Pancreas (tissue), 10 donors: ENCODE measurements at regions of chr21 and their contacts with region 1.

Region 1: GRCh38 chr21:39137248-39138178 is 45.7 kb downstream of the PSMG1 start:
- DNase-seq: no peak
- ATAC-seq: peak in 1 of 4 donors; percentile 33
- H3K4me3 ChIP-seq: no peak overlapping the region
- H3K27ac ChIP-seq: no peak overlapping the region
- H3K4me1 ChIP-seq: peaks cover 0 to 2% (median 0%) of the 10 kb centered on the region in 3 donors
- H3K27me3 ChIP-seq: no peaks in the 10 kb centered on the region
- CTCF ChIP-seq: no peak

Region 2: DNA sequence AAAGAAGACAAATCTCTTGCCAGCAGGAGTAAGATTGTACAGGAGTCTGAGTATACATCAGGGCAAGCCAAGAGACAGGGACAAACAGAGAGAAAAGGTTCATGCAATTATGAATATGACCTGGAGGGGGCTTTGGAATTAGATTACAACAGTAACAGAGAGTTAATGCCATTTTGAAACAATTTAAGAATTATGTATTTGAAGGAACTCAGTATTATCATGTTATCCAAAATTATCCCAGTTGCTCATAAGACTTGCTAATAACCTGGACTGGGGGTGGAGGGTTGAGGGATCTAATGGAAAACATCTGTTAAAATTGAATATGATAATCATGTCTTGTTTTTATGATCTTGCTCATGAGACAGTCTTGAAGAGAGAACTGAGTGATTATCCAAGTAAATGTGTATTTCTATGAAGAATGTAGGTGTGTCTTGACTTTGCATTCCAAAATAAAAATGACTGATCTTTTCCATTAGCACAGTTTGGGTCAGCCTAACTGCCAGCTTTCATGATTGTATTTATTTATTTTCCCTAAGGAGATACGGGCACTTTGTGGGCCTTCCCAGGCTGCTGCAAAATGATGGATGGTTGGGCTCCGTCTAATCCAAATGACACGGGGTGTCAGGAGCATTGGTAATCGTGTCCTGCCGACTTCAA is 756.9 kb before region 1 on chr21:
- intact Hi-C with region 1: loop called in 1 of 3 experiments (anchors 10 kb)
- DNase-seq: no peak
- ATAC-seq: no peak
- H3K4me3 ChIP-seq: no peak overlapping the region
- H3K27ac ChIP-seq: no peak overlapping the region
- H3K4me1 ChIP-seq: no peaks in the 10 kb centered on the region
- H3K27me3 ChIP-seq: peaks cover 0 to 4% (median 0%) of the 10 kb centered on the region in 4 donors
- CTCF ChIP-seq: no peak

Region 3: DNA sequence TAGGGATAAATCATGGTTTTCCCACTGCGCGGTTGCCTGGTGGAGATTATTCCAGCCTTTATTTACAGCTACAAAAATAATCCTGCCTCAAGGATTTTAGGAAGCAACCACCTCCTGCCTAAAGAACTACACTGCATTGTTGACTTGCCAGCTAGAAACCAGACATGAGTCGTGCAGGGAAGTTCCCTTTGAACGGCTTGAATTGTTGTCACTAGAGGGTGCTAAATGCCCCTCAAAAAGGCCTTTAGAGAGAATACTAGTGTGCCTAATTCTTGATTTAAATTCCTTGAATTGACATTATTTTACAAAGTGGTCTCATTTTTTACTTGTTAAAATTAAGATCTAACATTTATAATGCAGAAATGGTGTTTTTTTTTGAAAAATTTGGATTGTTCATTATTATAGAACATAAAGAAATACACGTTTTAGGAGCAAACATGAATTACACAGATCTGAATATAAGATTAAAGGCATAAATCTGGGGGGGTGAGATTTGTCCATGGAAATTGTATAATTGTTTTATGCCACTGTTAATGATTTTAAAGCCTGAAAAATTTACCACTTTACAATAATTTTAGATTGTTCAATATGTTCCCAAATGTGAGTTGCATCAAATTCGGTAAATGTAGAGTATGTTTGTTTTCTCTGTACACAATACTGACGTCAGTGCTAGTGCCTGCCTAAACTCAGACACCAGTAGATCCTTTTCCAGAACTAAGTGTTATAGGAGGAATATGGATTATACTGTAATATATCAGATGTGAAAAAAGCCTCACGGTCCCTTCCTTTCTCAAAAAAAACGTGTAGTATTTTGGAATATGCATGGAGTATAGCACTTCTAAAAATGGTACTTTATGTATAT is 631.6 kb before region 1 on chr21:
- intact Hi-C with region 1: loop called in 1 of 3 experiments (anchors 10 kb)
- DNase-seq: peak in 1 of 6 donors; percentile 27
- ATAC-seq: peak in 3 of 4 donors; percentile 86 to 94 (median 91)
- H3K4me3 ChIP-seq: no peak overlapping the region
- H3K27ac ChIP-seq: no peak overlapping the region
- H3K4me1 ChIP-seq: no peaks in the 10 kb centered on the region
- H3K27me3 ChIP-seq: peaks cover 0 to 5% (median 0%) of the 10 kb centered on the region in 4 donors
- CTCF ChIP-seq: peak in 3 of 4 donors; percentile 27 to 36 (median 32)

Region 4: DNA sequence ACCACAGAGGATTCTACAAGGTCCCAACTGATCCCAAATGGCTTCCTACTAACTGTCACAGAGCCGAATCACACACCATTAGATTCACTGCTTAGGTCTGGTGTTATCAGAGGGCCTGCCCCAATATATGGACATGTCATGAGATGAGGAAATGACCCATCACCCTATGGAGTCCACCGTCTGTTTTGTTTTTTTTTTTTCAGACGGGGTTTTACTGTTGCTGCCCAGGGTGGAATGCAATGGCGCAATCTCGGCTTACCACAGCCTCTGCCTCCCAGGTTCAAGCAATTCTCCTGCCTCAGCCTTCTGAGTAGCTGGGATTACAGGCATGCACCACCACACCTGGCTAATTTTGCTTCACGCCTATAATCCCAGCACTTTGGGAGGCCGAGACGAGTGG is 415.5 kb before region 1 on chr21:
- intact Hi-C with region 1: loop called in 1 of 3 experiments (anchors 10 kb)
- DNase-seq: no peak
- ATAC-seq: no peak
- H3K4me3 ChIP-seq: no peak overlapping the region
- H3K27ac ChIP-seq: no peak overlapping the region
- H3K4me1 ChIP-seq: no peaks in the 10 kb centered on the region
- H3K27me3 ChIP-seq: no peaks in the 10 kb centered on the region
- CTCF ChIP-seq: no peak

Region 5: DNA sequence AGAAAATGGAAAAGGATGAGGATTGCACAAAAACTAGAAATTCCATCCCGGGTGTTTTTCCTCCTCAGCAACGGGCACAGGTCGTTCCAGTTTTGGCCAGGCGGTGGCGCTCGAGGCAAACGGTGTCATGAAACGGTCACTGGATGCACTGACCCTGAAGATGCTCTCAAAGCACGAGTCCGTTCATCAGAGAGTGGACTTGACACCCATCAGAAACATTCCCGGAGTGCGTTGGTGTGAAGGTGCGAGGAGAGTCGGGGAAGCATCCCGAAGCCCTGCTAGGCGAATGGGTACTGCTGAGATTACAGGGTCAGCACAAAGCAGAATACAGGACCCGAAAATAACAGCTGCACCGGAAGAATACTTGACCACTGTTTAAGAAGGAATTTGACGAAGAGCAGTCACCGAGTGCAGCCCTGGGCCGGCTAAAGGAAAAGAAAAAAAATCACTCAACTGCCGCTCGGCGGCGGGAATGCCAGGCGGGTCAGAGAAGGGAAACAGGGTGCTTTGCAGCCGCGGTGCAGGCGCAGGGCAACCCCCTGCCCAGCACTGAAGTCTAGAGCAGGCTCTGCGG is 403.5 kb before region 1 on chr21:
- intact Hi-C with region 1: loop called (anchors 5 to 10 kb)
- DNase-seq: peak; percentile 47 to 99 (median 84)
- ATAC-seq: peak; percentile 66 to 98 (median 95)
- H3K4me3 ChIP-seq: peak overlapping the region in 1 of 4 donors; percentile 8
- H3K27ac ChIP-seq: peak overlapping the region in 2 of 4 donors; percentile 25 to 27
- H3K4me1 ChIP-seq: no peaks in the 10 kb centered on the region
- H3K27me3 ChIP-seq: peaks cover 0 to 6% (median 0%) of the 10 kb centered on the region in 4 donors
- CTCF ChIP-seq: peak; percentile 83 to 94 (median 86)

Region 6: DNA sequence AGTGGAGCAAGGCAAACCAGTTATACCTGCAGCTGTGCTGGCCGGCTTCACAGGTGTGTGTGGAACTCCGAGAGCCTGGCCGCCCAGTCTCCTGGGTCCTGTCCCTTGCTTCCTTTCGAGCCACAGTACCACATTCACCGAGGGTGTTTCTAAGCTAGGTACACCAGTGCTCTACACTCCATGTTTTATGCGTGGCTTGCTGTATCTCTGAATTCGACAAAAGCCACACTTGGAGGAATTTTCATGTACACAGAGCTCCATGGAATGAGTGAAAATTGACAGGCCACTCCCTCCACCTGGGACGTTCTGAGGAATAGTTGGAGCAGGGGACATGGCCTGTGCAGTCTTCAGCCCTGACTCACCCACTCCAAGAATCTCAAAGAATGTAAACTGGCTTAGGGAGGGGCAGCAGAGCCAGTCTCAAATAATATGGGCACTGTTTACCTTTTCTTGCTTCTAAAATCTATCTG is 317.8 kb before region 1 on chr21:
- intact Hi-C with region 1: no loop called
- DNase-seq: no peak
- ATAC-seq: no peak
- H3K4me3 ChIP-seq: no peak overlapping the region
- H3K27ac ChIP-seq: no peak overlapping the region
- H3K4me1 ChIP-seq: no peaks in the 10 kb centered on the region
- H3K27me3 ChIP-seq: no peaks in the 10 kb centered on the region
- CTCF ChIP-seq: no peak

Region 7: DNA sequence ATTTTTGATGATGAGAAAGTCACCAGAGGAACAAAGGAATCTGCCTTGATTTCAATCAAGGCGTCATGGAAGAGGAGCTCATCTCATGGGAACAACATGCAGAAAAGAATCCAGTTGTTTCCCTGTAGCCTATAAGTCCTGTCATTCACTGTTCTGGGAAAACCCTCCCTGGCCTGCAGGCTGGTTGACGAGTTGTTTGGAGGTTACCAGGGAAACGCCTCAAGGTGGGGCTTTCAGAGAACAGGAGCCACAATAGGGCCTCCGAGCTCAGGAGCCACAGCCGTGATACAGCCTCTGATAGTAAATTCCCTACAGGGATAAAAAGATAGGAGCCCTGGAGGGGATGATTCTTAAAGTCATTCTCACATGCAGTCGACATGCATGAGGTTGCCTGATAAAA is 89.4 kb before region 1 on chr21:
- intact Hi-C with region 1: no loop called
- DNase-seq: no peak
- ATAC-seq: peak in 2 of 4 donors; percentile 53 to 73
- H3K4me3 ChIP-seq: no peak overlapping the region
- H3K27ac ChIP-seq: no peak overlapping the region
- H3K4me1 ChIP-seq: no peaks in the 10 kb centered on the region
- H3K27me3 ChIP-seq: no peaks in the 10 kb centered on the region
- CTCF ChIP-seq: no peak